ENCODE measurements at regions of chr3 and their contacts with region 1.

Region 1: GRCh38 chr3:69671082-69671952 is 67.9 kb upstream of the MITF start:
- ATAC-seq: peak in 2 of 8 experiments; percentile 24 to 54
- H3K4me3 ChIP-seq: no peak overlapping the region
- H3K27ac ChIP-seq: no peak overlapping the region
- H3K4me1 ChIP-seq: peaks cover 0 to 5% of the 10 kb centered on the region in 2 donors

Region 2: GRCh38 chr3:69161587-69162307 is 509.6 kb before region 1 on chr3:
- in situ Hi-C with region 1: loop called (anchors 10 to 25 kb)
- ATAC-seq: peak in 4 of 8 experiments; percentile 27 to 54 (median 35)
- H3K4me3 ChIP-seq: no peak overlapping the region
- H3K27ac ChIP-seq: no peak overlapping the region
- H3K4me1 ChIP-seq: no peaks in the 10 kb centered on the region

Region 3: DNA sequence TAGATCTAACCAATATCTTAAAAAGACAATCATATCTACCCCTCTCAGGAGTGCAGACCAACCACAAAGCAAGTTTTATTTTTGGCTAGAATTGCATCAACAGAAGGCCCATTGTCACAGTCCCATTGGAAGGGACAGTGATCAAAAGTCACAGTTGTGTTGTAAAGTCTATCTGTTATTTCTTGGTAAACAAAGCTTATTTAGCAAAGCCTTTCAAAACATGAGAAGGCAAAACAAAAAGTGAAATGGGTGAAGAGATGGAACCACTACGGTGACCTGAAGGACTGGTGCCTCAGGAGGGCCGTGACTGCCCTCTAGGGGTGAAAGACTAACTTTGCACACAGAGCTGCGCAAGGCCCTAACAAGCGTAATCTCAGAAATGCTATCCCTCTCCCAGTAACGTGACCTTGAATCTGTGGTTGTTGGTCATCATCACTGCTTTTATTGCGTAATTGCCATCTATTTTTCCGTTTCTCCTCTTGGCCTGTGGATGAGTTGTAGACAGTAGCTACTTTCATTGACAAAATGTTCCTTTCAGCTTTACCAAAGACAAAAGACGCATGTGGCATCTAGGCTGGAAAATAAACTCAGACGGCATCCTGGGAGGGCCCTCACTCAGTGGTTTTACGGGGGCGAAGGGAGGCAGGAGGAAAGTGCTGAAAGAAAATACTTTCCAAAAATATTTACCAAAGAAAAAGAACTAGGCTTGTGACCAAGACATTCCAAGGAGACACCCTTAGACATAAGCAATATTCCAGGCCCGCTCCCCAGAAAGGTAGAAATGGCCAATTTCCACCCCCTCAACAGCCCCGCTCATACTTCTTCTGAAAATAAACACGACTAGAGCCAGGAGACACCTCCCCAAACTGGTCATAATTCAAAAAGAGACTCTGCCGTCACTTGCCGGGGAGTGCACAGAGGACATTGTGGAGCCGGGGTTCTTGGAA is 364.8 kb before region 1 on chr3:
- in situ Hi-C with region 1: loop called in 2 of 9 experiments (anchors 25 kb)
- ATAC-seq: peak; percentile 96 to 99 (median 99)
- H3K4me3 ChIP-seq: no peak overlapping the region
- H3K27ac ChIP-seq: no peak overlapping the region
- H3K4me1 ChIP-seq: no peaks in the 10 kb centered on the region

Region 4: DNA sequence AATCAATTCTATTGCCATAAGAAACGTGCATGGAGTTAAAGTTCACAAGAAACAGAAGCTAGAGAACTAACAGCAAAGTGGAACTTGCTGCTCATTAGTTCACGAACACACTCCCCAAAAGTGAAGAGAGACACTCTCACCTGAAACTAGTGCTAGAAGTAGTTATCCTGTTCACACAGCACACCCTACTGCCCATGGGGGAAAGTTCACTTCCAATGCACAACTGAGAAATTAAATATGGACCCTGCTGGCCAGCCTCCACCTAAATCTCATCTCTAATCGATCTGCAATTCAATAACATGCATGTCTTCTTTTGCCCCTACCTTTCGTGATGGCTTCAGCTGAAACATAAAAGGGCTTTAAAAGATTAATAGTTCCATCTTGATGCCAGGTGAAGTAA is 246.1 kb before region 1 on chr3:
- in situ Hi-C with region 1: loop called in 2 of 9 experiments (anchors 25 kb)
- ATAC-seq: peak in 4 of 8 experiments; percentile 18 to 51 (median 40)
- H3K4me3 ChIP-seq: no peak overlapping the region
- H3K27ac ChIP-seq: no peak overlapping the region
- H3K4me1 ChIP-seq: peaks cover 0 to 3% of the 10 kb centered on the region in 2 donors

Region 5: GRCh38 chr3:69451594-69451993 is 219.7 kb before region 1 on chr3:
- in situ Hi-C with region 1: loop called in 3 of 9 experiments (anchors 25 kb)
- ATAC-seq: peak in 6 of 8 experiments; percentile 3 to 86 (median 58)
- H3K4me3 ChIP-seq: no peak overlapping the region
- H3K27ac ChIP-seq: no peak overlapping the region
- H3K4me1 ChIP-seq: peaks cover 0 to 7% of the 10 kb centered on the region in 2 donors

Region 6: GRCh38 chr3:69791919-69792399 is 120.6 kb after region 1 on chr3:
- in situ Hi-C with region 1: loop called in 1 of 9 experiments (anchors 25 kb)
- ATAC-seq: peak in 3 of 8 experiments; percentile 53 to 83 (median 55)
- H3K4me3 ChIP-seq: no peak overlapping the region
- H3K27ac ChIP-seq: no peak overlapping the region
- H3K4me1 ChIP-seq: no peaks in the 10 kb centered on the region

Region 7: DNA sequence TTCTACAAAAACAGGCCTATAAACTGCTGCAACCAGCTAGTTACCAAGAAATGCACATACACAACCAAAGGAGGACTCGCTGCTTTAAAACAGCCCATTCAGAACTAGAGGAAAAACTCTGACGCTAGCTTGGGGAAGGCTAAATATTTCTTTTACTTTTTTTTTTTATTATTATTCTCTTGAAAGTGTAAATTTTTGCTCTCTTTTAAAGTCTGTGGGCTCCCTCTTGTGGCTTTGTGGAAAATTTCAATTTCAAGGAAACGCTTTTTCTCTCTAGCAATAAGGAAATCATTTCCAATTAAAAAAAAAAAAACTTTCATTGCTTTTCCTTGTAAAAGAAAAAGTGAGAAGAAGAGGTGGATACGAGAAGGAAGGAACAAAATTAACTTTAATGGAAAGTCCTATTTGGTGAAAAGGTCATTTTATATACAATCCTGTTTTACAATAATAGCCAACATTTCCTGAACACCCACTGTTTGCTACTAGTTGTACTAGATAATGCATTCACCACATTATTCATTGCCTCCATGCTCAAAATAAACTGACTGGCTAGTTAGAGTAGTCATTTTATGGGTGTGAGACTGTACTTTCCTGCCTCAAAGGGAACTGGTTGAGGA is 277.0 kb after region 1 on chr3:
- in situ Hi-C with region 1: loop called in 1 of 9 experiments (anchors 25 kb)
- ATAC-seq: peak in 1 of 8 experiments; percentile 34
- H3K4me3 ChIP-seq: no peak overlapping the region
- H3K27ac ChIP-seq: no peak overlapping the region
- H3K4me1 ChIP-seq: peaks cover 0 to 5% of the 10 kb centered on the region in 2 donors

Measured in motor neuron (in vitro differentiated cells).